ENCODE measurements at regions of chr5 and their contacts with region 1.

Region 1: GRCh38 chr5:133900534-133901270 is 67.7 kb downstream of the C5orf15 start:
- DNase-seq: no peak
- H3K4me3 ChIP-seq: no peak overlapping the region
- H3K27ac ChIP-seq: no peak overlapping the region
- H3K4me1 ChIP-seq: peaks cover 9% of the 10 kb centered on the region
- H3K27me3 ChIP-seq: no peaks in the 10 kb centered on the region
- CTCF ChIP-seq: no peak

Region 2: GRCh38 chr5:133921979-133922378 is 21.3 kb after region 1 on chr5:
- CTCF ChIA-PET with region 1: no interaction called
- POLR2A ChIA-PET with region 1: no interaction called
- intact Hi-C with region 1: loop called (anchors 1 kb)
- DNase-seq: no peak
- H3K4me3 ChIP-seq: no peak overlapping the region
- H3K27ac ChIP-seq: no peak overlapping the region
- H3K4me1 ChIP-seq: peaks cover 41% of the 10 kb centered on the region
- H3K27me3 ChIP-seq: no peaks in the 10 kb centered on the region
- CTCF ChIP-seq: no peak

Region 3: GRCh38 chr5:133944263-133945185 is 43.8 kb after region 1 on chr5:
- CTCF ChIA-PET with region 1: no interaction called
- POLR2A ChIA-PET with region 1: no interaction called
- intact Hi-C with region 1: no loop called
- DNase-seq: peak; percentile 41 to 70
- H3K4me3 ChIP-seq: no peak overlapping the region
- H3K27ac ChIP-seq: no peak overlapping the region
- H3K4me1 ChIP-seq: peaks cover 28% of the 10 kb centered on the region
- H3K27me3 ChIP-seq: no peaks in the 10 kb centered on the region
- CTCF ChIP-seq: peak; percentile 91